Naive thymus-derived CD4-positive, alpha-beta T cell (primary cell): ENCODE measurements at regions of chr12 and their contacts with region 1.

Region 1: DNA sequence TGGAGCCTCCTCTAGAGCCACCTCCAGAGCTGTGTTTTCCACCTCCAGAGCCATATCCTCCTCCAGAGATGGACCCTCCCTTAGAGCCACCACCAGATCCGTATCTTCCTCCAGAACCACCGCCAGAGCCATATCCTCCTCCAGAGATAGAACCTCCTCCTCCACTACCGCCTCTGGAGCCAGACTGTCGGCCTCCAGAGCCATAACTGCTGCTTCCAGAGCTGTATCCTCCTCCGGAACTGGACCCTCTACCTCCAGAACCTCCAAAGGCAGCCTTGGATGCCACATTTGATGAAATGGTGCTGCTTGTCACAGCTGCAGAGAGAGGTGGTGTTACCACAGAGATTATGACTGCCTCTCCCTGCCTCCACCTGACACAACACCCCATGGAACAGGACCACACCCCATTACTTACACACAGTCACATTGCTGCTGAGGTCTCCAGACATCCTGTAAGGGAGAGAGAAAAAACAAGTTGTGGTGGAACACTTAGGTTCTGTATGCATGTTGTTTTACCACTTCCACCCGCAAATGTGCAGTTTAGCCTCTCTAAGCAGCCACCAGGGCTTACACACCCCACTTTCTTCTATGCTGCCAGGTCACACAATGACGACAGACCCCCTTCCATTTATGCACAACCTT is 6.8 kb downstream of the KRT2 start:
- DNase-seq: peak in 7 of 9 donors; percentile 81 to 98 (median 94)
- ATAC-seq: peak; percentile 96
- H3K4me3 ChIP-seq: no peak overlapping the region
- H3K4me3 Mint-ChIP-seq: peak overlapping the region; percentile 72 to 88 (median 83)
- H3K27ac ChIP-seq: peak overlapping the region; percentile 92
- H3K27ac Mint-ChIP-seq: peak overlapping the region; percentile 97 to 100 (median 100)
- H3K4me1 ChIP-seq: peaks cover 28 to 81% of the 10 kb centered on the region in 2 donors
- H3K4me1 Mint-ChIP-seq: peaks cover 68 to 99% (median 94%) of the 10 kb centered on the region in 7 donors
- H3K27me3 ChIP-seq: no peaks in the 10 kb centered on the region
- H3K27me3 Mint-ChIP-seq: peaks cover 0 to 17% (median 0%) of the 10 kb centered on the region in 5 donors

Region 2: GRCh38 chr12:52634266-52635056 is 10.8 kb before region 1 on chr12:
- CTCF ChIA-PET with region 1: interaction called, 12 read pairs
- POLR2A ChIA-PET with region 1: interaction called, 102 read pairs
- intact Hi-C with region 1: loop called in 1 of 2 experiments (anchors 1 kb)
- DNase-seq: peak in 1 of 9 donors; percentile 16
- ATAC-seq: no peak
- H3K4me3 ChIP-seq: no peak overlapping the region
- H3K4me3 Mint-ChIP-seq: peak overlapping the region in 9 of 10 donors; percentile 36 to 95 (median 60)
- H3K27ac ChIP-seq: no peak overlapping the region
- H3K27ac Mint-ChIP-seq: peak overlapping the region; percentile 50 to 96 (median 90)
- H3K4me1 ChIP-seq: peaks cover 19 to 59% of the 10 kb centered on the region in 2 donors
- H3K4me1 Mint-ChIP-seq: peaks cover 44 to 88% (median 67%) of the 10 kb centered on the region in 7 donors
- H3K27me3 ChIP-seq: peaks cover 0 to 3% of the 10 kb centered on the region in 2 donors
- H3K27me3 Mint-ChIP-seq: peaks cover 0 to 16% (median 0%) of the 10 kb centered on the region in 5 donors

Region 3: DNA sequence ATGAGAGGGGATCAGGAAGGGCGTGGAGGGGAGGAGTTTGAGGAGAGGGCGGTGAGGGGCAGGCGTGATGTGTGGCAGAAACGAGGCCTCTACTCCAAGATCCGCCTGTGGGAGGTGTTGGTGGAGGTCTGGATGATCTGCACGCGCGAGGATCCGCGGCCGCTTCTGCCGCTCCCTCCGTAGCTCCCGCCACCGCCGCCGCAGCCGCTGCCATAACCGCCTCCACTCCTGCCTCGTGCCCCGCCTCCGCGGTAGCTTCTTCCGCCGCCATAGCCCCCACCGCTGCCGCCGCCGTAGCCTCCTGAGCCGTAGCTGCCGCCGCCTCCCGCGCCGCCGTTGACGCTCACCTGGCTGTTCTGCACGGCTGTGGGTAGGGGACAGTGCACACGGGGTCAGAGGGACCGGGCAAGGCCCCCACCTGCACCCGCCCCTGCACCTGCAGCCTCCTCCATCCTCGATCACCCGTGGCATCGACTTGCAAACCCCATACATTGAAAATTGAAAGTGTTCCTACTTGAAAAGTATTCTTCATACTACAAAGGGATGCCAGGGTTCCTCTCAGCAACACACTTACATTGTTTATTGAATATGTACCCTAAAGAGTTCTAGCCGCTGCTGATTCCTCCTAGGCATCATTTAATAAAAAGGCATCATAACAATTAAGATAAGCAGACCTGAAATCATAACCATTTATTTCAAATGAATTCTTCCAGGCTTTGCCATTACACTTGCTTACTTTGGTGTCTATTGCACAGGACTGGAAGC is 46.0 kb after region 1 on chr12:
- CTCF ChIA-PET with region 1: interaction called, 3 read pairs
- POLR2A ChIA-PET with region 1: interaction called, 17 read pairs
- intact Hi-C with region 1: loop called (anchors 1 to 5 kb)
- DNase-seq: peak; percentile 46 to 74 (median 71)
- ATAC-seq: peak; percentile 91
- H3K4me3 ChIP-seq: peak overlapping the region; percentile 50
- H3K4me3 Mint-ChIP-seq: peak overlapping the region; percentile 85 to 97 (median 91)
- H3K27ac ChIP-seq: peak overlapping the region; percentile 68
- H3K27ac Mint-ChIP-seq: peak overlapping the region in 8 of 9 donors; percentile 90 to 98 (median 97)
- H3K4me1 ChIP-seq: peaks cover 5 to 27% of the 10 kb centered on the region in 2 donors
- H3K4me1 Mint-ChIP-seq: peaks cover 8 to 63% (median 55%) of the 10 kb centered on the region in 7 donors
- H3K27me3 ChIP-seq: no peaks in the 10 kb centered on the region
- H3K27me3 Mint-ChIP-seq: peaks cover 0 to 79% (median 0%) of the 10 kb centered on the region in 5 donors

Region 4: GRCh38 chr12:52708010-52708409 is 62.8 kb after region 1 on chr12:
- CTCF ChIA-PET with region 1: interaction called, 3 read pairs
- POLR2A ChIA-PET with region 1: interaction called, 3 read pairs
- intact Hi-C with region 1: loop called in 1 of 2 experiments (anchors 1 kb)
- DNase-seq: peak in 7 of 9 donors; percentile 26 to 66 (median 52)
- ATAC-seq: peak; percentile 49
- H3K4me3 ChIP-seq: no peak overlapping the region
- H3K4me3 Mint-ChIP-seq: peak overlapping the region in 5 of 10 donors; percentile 11 to 63 (median 50)
- H3K27ac ChIP-seq: no peak overlapping the region
- H3K27ac Mint-ChIP-seq: peak overlapping the region in 8 of 9 donors; percentile 75 to 91 (median 83)
- H3K4me1 ChIP-seq: peaks cover 0 to 23% of the 10 kb centered on the region in 2 donors
- H3K4me1 Mint-ChIP-seq: peaks cover 4 to 62% (median 40%) of the 10 kb centered on the region in 7 donors
- H3K27me3 ChIP-seq: no peaks in the 10 kb centered on the region
- H3K27me3 Mint-ChIP-seq: peaks cover 0 to 29% (median 0%) of the 10 kb centered on the region in 5 donors